ENCODE measurements at regions of chr2 and their contacts with region 1.

Region 1: DNA sequence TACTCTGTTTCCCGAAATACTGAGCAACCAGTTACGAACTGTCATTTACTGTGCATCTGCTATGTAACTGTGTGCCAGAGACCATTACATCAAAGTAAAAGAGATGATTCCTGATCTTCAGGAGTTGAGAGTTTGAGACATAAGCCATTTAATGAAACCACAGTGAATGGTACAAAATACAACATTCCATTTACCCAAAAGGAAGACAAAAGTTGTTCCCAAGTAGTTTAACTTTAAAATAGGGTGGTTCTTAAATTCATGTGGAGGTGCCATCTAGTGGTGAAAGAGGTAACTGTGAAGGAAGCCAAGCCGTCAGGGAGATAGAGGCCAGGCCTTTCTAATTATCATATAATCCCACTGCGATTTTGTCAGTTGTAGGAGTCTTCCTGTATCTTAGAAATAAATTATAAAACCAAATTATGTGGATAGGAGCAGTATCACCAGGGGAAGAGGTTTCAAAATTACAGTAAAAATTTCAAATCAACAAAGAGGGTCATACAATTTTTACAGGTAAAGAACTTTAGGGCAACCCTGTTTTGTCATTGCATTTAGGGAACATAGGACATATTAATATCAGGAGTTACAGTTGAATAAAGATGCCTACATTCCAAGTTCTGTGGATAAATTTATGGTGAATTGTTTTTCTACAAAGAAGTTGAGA is 67.7 kb downstream of the EPAS1 start:
- DNase-seq: peak; percentile 52
- H3K4me3 Mint-ChIP-seq: no peak overlapping the region
- H3K27ac Mint-ChIP-seq: no peak overlapping the region
- H3K4me1 Mint-ChIP-seq: no peaks in the 10 kb centered on the region
- H3K27me3 Mint-ChIP-seq: no peaks in the 10 kb centered on the region
- CTCF ChIP-seq: peak; percentile 49

Region 2: DNA sequence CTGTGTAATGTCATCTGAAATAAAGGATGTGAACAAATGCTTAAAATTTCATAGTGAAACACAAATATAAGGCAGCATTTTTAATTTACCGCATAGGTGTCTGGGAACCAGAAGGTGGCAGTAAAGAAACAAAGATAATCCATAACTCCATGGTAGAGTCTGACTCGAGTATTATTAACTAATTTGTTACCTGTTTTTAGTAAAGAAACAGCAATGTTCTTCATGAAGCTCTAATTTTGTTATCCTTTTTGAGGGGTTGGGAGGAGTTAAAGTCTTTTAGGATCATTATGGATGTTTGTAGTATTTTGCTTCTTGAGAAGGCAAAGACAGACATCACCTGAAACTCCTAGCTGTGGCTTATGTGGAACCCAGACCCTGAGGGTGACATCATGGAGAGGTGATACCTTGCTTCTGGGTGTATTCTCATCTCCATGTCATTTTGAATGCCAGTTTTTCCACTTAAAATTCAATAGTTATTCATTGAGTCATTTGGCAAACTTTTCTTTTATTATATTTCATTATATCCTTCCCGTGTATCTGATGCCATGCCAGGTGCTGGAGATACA is 353.9 kb before region 1 on chr2:
- CTCF ChIA-PET with region 1: interaction called, 3 read pairs
- intact Hi-C with region 1: loop called (anchors 1 kb)
- DNase-seq: no peak
- H3K4me3 Mint-ChIP-seq: no peak overlapping the region
- H3K27ac Mint-ChIP-seq: no peak overlapping the region
- H3K4me1 Mint-ChIP-seq: no peaks in the 10 kb centered on the region
- H3K27me3 Mint-ChIP-seq: no peaks in the 10 kb centered on the region
- CTCF ChIP-seq: no peak

Region 3: GRCh38 chr2:46187112-46187618 is 177.8 kb before region 1 on chr2:
- CTCF ChIA-PET with region 1: no interaction called
- intact Hi-C with region 1: loop called (anchors 10 kb)
- DNase-seq: no peak
- H3K4me3 Mint-ChIP-seq: no peak overlapping the region
- H3K27ac Mint-ChIP-seq: no peak overlapping the region
- H3K4me1 Mint-ChIP-seq: no peaks in the 10 kb centered on the region
- H3K27me3 Mint-ChIP-seq: no peaks in the 10 kb centered on the region
- CTCF ChIP-seq: no peak

Region 4: GRCh38 chr2:46296840-46297545 is 67.9 kb before region 1 on chr2 and contains the start of gene EPAS1:
- CTCF ChIA-PET with region 1: no interaction called
- intact Hi-C with region 1: loop called (anchors 2 kb)
- DNase-seq: peak; percentile 80
- H3K4me3 Mint-ChIP-seq: peak within 1 kb of the TSS; percentile 95
- H3K27ac Mint-ChIP-seq: peak within 1 kb of the TSS; percentile 11
- H3K4me1 Mint-ChIP-seq: peaks cover 15% of the 10 kb centered on the region
- H3K27me3 Mint-ChIP-seq: no peaks in the 10 kb centered on the region
- CTCF ChIP-seq: no peak
- total RNA-seq, gene EPAS1: 18.5 and 28.1 TPM in 2 replicates

Region 5: GRCh38 chr2:47119001-47119400 is 754.1 kb after region 1 on chr2:
- CTCF ChIA-PET with region 1: no interaction called
- intact Hi-C with region 1: no loop called
- DNase-seq: no peak
- H3K4me3 Mint-ChIP-seq: no peak overlapping the region
- H3K27ac Mint-ChIP-seq: no peak overlapping the region
- H3K4me1 Mint-ChIP-seq: no peaks in the 10 kb centered on the region
- H3K27me3 Mint-ChIP-seq: no peaks in the 10 kb centered on the region
- CTCF ChIP-seq: no peak